B cell (primary cell): ENCODE measurements at regions of chr6 and their contacts with region 1.

Region 1: DNA sequence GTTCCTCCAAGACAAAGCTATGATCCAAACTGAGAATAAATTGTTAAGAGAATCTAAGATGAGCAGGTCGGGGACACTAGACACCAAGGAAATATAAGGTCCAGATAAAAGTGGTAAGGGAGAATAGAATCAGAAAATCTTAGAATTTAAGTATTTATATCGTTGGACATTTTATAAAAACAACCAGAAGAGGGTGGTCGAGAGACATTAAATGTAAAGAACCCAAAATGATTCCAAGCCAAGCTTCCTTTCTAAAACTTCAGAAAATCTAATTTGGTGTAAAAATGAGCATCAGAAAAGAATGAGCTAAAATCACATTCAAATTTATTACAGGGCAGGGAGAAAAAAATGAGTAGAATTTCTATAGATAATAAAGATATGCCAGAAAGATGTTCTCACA is 97.8 kb upstream of the OGFRL1 start:
- DNase-seq: peak; percentile 56
- ATAC-seq: no peak
- H3K4me3 ChIP-seq: no peak overlapping the region
- H3K4me3 Mint-ChIP-seq: no peak overlapping the region
- H3K27ac ChIP-seq: no peak overlapping the region
- H3K27ac Mint-ChIP-seq: no peak overlapping the region
- H3K4me1 ChIP-seq: no peaks in the 10 kb centered on the region
- H3K4me1 Mint-ChIP-seq: no peaks in the 10 kb centered on the region
- H3K27me3 ChIP-seq: no peaks in the 10 kb centered on the region
- H3K27me3 Mint-ChIP-seq: peaks cover 16% of the 10 kb centered on the region
- CTCF ChIP-seq: peak; percentile 78

Region 2: DNA sequence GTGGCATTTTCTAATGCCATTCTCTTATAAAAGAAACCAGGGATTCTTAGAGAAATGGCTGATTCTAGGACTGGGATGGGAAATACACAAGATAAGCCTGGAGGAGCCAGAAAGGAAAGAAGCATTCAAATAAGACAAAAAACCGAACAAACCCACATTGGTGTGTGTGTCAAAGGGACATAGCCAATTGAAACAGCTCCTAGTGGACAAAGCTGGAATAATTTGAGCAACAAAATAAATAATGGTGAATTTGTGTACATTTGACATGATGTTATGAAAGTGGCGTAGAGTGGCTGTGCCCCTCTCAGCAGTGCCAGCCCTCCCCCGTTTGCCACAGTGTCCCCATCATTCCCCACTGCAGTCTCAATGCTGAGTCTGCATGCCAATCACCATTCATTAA is 289.5 kb before region 1 on chr6:
- CTCF ChIA-PET with region 1: no interaction called
- POLR2A ChIA-PET with region 1: no interaction called
- intact Hi-C with region 1: no loop called
- DNase-seq: no peak
- ATAC-seq: no peak
- H3K4me3 ChIP-seq: no peak overlapping the region
- H3K4me3 Mint-ChIP-seq: no peak overlapping the region
- H3K27ac ChIP-seq: no peak overlapping the region
- H3K27ac Mint-ChIP-seq: no peak overlapping the region
- H3K4me1 ChIP-seq: no peaks in the 10 kb centered on the region
- H3K4me1 Mint-ChIP-seq: no peaks in the 10 kb centered on the region
- H3K27me3 ChIP-seq: peaks cover 0 to 2% (median 1%) of the 10 kb centered on the region in 4 experiments
- H3K27me3 Mint-ChIP-seq: peaks cover 27% of the 10 kb centered on the region
- CTCF ChIP-seq: peak; percentile 21

Region 3: DNA sequence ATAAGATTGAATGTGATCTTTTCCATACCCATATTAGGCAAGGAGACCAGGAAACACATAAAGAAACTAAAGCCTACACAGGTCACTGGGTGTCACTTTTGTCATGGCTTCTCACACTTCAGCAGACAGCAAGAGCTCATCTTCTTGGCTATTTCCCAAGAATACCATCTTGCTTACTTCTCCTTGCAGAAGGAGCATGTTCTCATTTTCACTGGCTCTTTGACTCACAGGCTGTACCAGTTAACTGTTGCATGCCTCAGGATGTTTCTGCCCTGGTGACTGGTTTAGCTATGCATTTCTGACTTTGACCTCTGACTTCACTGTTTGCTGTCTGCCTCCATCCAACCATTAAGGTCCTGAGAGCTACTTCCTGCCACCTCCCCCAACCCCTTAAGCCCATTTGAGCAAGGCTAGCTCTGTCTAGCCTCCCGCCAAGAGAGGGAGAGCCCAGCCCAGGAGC is 57.5 kb after region 1 on chr6:
- CTCF ChIA-PET with region 1: interaction called, 10 read pairs
- POLR2A ChIA-PET with region 1: no interaction called
- intact Hi-C with region 1: no loop called
- DNase-seq: peak; percentile 35
- ATAC-seq: peak; percentile 62
- H3K4me3 ChIP-seq: no peak overlapping the region
- H3K4me3 Mint-ChIP-seq: peak overlapping the region; percentile 17
- H3K27ac ChIP-seq: peak overlapping the region in 1 of 2 donors; percentile 50
- H3K27ac Mint-ChIP-seq: peak overlapping the region; percentile 59
- H3K4me1 ChIP-seq: peaks cover 26 to 50% of the 10 kb centered on the region in 2 donors
- H3K4me1 Mint-ChIP-seq: peaks cover 53% of the 10 kb centered on the region
- H3K27me3 ChIP-seq: no peaks in the 10 kb centered on the region
- H3K27me3 Mint-ChIP-seq: no peaks in the 10 kb centered on the region
- CTCF ChIP-seq: no peak

Region 4: DNA sequence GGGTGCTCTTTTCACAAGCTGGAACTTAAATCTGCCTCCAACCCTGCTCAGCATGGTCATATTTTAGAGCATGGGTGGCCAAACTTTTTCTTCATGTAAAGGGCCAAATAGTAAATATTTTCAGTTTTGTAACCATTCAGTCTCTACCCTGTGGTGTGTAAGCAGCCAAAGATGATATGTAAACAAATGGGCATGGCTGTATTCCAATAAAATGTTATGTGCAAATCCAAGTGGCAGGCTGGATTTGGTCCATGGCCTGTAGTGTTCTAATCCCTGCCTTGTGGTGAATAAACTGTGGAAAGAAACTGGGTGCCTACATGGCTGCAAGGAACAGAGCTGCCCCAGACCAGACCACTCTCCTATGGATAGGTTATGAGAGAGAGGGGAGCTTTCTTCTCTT is 130.5 kb after region 1 on chr6:
- CTCF ChIA-PET with region 1: interaction called, 10 read pairs
- POLR2A ChIA-PET with region 1: no interaction called
- intact Hi-C with region 1: no loop called
- DNase-seq: no peak
- ATAC-seq: no peak
- H3K4me3 ChIP-seq: no peak overlapping the region
- H3K4me3 Mint-ChIP-seq: no peak overlapping the region
- H3K27ac ChIP-seq: no peak overlapping the region
- H3K27ac Mint-ChIP-seq: no peak overlapping the region
- H3K4me1 ChIP-seq: no peaks in the 10 kb centered on the region
- H3K4me1 Mint-ChIP-seq: no peaks in the 10 kb centered on the region
- H3K27me3 ChIP-seq: no peaks in the 10 kb centered on the region
- H3K27me3 Mint-ChIP-seq: peaks cover 4% of the 10 kb centered on the region
- CTCF ChIP-seq: no peak

Region 5: GRCh38 chr6:71349395-71349794 is 158.6 kb after region 1 on chr6:
- CTCF ChIA-PET with region 1: interaction called, 108 read pairs
- POLR2A ChIA-PET with region 1: no interaction called
- intact Hi-C with region 1: loop called (anchors 1 kb)
- DNase-seq: peak; percentile 57
- ATAC-seq: peak; percentile 47
- H3K4me3 ChIP-seq: no peak overlapping the region
- H3K4me3 Mint-ChIP-seq: no peak overlapping the region
- H3K27ac ChIP-seq: no peak overlapping the region
- H3K27ac Mint-ChIP-seq: no peak overlapping the region
- H3K4me1 ChIP-seq: peaks cover 5 to 9% of the 10 kb centered on the region in 2 donors
- H3K4me1 Mint-ChIP-seq: peaks cover 10% of the 10 kb centered on the region
- H3K27me3 ChIP-seq: no peaks in the 10 kb centered on the region
- H3K27me3 Mint-ChIP-seq: peaks cover 1% of the 10 kb centered on the region
- CTCF ChIP-seq: peak; percentile 94

Region 6: DNA sequence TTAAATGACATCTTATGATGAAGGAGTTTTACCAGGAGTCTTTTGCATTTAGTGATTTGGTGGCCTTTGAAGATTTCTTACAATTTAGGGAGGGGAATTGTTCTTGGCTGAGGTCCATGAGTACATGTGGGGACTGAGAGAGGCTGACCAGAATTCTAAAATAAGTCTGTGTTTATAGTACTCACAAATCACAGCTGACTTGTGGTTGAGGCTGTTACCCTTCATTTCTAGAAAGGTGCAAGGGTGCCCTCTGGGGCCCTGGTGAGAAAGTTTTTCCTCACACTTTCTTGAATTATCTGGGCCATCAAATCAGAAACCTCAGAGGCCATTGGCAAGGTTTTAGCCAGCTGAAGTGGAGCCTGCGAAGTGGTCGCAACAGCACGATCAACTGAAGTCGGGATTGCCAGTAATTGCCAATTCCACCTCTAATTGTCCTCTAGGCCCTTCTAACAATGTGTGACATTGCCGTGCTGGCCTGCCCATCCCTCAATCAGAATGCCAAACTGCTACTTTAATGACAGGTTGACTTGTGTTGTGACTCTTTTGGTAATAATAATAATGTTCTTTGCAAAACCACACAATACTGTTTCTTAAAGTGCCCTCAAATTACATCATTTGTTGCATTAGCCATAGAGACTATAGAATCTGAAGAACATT is 319.4 kb after region 1 on chr6:
- CTCF ChIA-PET with region 1: interaction called, 11 read pairs
- POLR2A ChIA-PET with region 1: no interaction called
- intact Hi-C with region 1: loop called (anchors 10 kb)
- DNase-seq: peak; percentile 62
- ATAC-seq: no peak
- H3K4me3 ChIP-seq: no peak overlapping the region
- H3K4me3 Mint-ChIP-seq: no peak overlapping the region
- H3K27ac ChIP-seq: no peak overlapping the region
- H3K27ac Mint-ChIP-seq: no peak overlapping the region
- H3K4me1 ChIP-seq: no peaks in the 10 kb centered on the region
- H3K4me1 Mint-ChIP-seq: peaks cover 4% of the 10 kb centered on the region
- H3K27me3 ChIP-seq: no peaks in the 10 kb centered on the region
- H3K27me3 Mint-ChIP-seq: peaks cover 6% of the 10 kb centered on the region
- CTCF ChIP-seq: peak; percentile 58